ENCODE measurements at regions of chr9 and their contacts with region 1.

Region 1: DNA sequence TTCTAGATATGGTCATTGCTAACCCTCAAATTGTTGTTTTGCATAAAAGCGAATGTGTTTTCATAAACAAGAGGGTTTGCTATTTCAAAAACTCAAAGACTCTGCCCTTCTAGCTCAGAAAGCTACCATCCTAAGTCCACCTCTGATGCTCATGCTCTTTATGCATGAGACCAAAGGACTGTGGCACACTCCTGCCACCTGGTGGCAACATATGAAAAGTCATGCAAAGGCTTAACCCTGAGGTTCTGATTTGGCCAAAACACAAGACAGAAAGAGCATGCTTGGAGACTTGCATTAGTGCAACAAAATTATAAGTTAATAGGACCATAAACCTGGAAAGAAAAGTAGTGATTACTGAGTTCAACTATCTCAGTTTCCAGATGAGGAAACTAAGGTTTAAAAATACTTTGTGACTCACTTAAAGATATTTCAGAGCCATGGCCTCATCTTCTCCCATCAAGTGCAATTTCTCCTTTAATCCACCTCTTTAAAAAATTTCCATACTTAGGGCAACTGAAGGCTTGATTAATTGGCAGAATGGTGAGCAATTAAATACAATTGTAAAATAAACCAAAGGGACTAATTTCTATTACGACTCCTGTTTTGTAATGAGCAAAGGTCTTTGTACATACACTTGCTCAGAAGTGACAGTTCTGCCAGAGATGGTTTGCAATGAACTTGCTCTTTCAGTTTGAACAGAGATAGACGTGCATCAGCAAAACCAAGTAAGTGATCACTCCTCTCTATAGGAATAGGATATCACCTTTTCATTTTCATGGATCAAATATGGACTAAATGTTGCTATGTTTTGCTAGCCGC is 110.7 kb upstream of the RAD23B start:
- DNase-seq: peak; percentile 34 to 72
- ATAC-seq: peak; percentile 28 to 44
- H3K4me3 ChIP-seq: no peak overlapping the region
- H3K27ac ChIP-seq: peak overlapping the region; percentile 45 to 94 (median 74)
- H3K4me1 ChIP-seq: peaks cover 38 to 48% of the 10 kb centered on the region in 2 donors
- H3K27me3 ChIP-seq: no peaks in the 10 kb centered on the region
- CTCF ChIP-seq: peak; percentile 91 to 95 (median 92)
- POLR2A ChIP-seq: no peak

Region 2: GRCh38 chr9:106450549-106450948 is 721.8 kb before region 1 on chr9:
- in situ Hi-C with region 1: no loop called
- intact Hi-C with region 1: loop called (anchors 2 kb)
- DNase-seq: peak; percentile 83 to 91
- ATAC-seq: peak; percentile 96 to 98
- H3K4me3 ChIP-seq: no peak overlapping the region
- H3K27ac ChIP-seq: peak overlapping the region; percentile 75 to 83 (median 80)
- H3K4me1 ChIP-seq: peaks cover 11 to 19% of the 10 kb centered on the region in 2 donors
- H3K27me3 ChIP-seq: no peaks in the 10 kb centered on the region
- CTCF ChIP-seq: no peak
- POLR2A ChIP-seq: no peak

Region 3: DNA sequence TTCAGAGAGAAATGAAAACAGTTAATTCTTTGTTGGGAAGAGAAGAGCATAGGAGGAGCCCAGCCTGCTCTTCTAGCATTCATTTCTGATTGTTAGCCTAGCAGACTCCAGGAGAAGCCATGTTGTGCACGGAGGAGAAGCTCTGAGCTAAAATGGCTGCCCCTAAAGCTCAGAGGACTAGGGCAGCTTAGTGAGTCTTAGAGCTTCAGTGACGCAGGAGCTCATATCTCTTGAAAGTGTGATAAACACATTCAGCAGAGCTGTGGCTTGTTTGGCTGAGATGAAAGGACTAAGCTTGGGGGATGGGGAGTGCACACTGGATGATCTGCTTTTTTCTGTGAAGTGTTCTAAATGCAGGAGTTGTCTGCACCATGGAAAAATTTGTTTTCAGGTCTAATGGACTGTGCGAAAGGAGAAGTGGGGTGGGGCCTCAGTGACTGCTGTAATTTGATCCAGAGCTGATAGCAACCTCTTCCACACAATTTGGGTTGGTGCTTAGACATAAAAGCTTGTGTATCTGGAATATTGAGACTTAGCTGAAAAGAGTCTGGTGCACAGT is 250.9 kb before region 1 on chr9:
- in situ Hi-C with region 1: no loop called
- intact Hi-C with region 1: loop called (anchors 10 kb)
- DNase-seq: peak; percentile 27 to 43
- ATAC-seq: peak; percentile 54 to 70
- H3K4me3 ChIP-seq: peak overlapping the region; percentile 11 to 30 (median 24)
- H3K27ac ChIP-seq: peak overlapping the region; percentile 82 to 90 (median 88)
- H3K4me1 ChIP-seq: peaks cover 49 to 61% of the 10 kb centered on the region in 2 donors
- H3K27me3 ChIP-seq: no peaks in the 10 kb centered on the region
- CTCF ChIP-seq: no peak
- POLR2A ChIP-seq: no peak

Region 4: DNA sequence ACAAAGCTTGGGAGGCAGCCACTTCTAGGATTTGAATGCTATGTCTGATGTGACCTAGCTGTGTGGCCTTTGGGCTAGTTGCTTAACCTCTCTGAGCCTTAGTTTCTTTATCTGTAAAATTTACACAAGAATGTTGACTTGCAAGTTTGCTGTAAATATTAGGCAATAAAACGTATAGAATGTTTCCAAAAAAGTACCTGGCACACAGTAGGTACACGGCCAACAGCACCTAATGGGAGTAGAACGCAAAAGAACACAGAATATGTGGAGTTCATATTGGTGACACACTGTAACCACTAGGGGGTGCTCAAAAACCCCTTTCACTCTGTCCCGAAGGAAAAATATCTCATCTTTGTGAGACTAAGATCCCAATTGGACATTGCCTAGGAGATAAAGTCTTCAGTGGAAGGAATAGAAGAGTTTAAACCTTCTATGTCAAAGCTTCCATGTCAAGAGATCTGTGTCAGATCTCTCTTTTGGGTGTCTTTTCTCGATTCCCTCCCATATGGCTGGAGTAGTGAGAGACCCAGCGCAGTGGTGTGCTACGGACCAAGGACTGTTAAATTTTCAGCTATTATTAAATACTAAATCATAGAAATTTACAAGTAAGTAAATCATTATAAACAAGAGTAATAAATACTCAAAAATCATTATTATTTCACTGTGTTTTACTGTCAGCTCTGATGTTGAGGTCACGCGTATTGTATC is 34.7 kb before region 1 on chr9:
- in situ Hi-C with region 1: no loop called
- intact Hi-C with region 1: loop called (anchors 2 kb)
- DNase-seq: no peak
- ATAC-seq: peak; percentile 65 to 75
- H3K4me3 ChIP-seq: no peak overlapping the region
- H3K27ac ChIP-seq: no peak overlapping the region
- H3K4me1 ChIP-seq: peaks cover 6 to 8% of the 10 kb centered on the region in 2 donors
- H3K27me3 ChIP-seq: no peaks in the 10 kb centered on the region
- CTCF ChIP-seq: peak; percentile 52 to 70 (median 65)
- POLR2A ChIP-seq: no peak

Region 5: GRCh38 chr9:107340920-107341632 is 168.7 kb after region 1 on chr9:
- in situ Hi-C with region 1: no loop called
- intact Hi-C with region 1: loop called (anchors 10 kb)
- DNase-seq: peak; percentile 53 to 72
- ATAC-seq: peak; percentile 21 to 61
- H3K4me3 ChIP-seq: no peak overlapping the region
- H3K27ac ChIP-seq: no peak overlapping the region
- H3K4me1 ChIP-seq: peaks cover 28 to 34% of the 10 kb centered on the region in 2 donors
- H3K27me3 ChIP-seq: no peaks in the 10 kb centered on the region
- CTCF ChIP-seq: peak; percentile 71 to 95 (median 90)
- POLR2A ChIP-seq: no peak

Measured in gastrocnemius medialis (tissue), 4 donors.